Heart left ventricle (tissue), 16 donors: ENCODE measurements at regions of chr12 and their contacts with region 1.

Region 1: GRCh38 chr12:124518051-124518932 is 49.1 kb downstream of the NCOR2 start:
- DNase-seq: peak; percentile 97 to 99 (median 98)
- ATAC-seq: peak; percentile 69 to 79 (median 72)
- H3K4me3 ChIP-seq: peak overlapping the region; percentile 35 to 81 (median 58)
- H3K27ac ChIP-seq: peak overlapping the region; percentile 90 to 100 (median 95)
- H3K4me1 ChIP-seq: peaks cover 15 to 98% (median 85%) of the 10 kb centered on the region in 12 donors
- H3K27me3 ChIP-seq: no peaks in the 10 kb centered on the region
- CTCF ChIP-seq: no peak
- POLR2A ChIP-seq: peak in 1 of 2 donors; percentile 32

Region 2: DNA sequence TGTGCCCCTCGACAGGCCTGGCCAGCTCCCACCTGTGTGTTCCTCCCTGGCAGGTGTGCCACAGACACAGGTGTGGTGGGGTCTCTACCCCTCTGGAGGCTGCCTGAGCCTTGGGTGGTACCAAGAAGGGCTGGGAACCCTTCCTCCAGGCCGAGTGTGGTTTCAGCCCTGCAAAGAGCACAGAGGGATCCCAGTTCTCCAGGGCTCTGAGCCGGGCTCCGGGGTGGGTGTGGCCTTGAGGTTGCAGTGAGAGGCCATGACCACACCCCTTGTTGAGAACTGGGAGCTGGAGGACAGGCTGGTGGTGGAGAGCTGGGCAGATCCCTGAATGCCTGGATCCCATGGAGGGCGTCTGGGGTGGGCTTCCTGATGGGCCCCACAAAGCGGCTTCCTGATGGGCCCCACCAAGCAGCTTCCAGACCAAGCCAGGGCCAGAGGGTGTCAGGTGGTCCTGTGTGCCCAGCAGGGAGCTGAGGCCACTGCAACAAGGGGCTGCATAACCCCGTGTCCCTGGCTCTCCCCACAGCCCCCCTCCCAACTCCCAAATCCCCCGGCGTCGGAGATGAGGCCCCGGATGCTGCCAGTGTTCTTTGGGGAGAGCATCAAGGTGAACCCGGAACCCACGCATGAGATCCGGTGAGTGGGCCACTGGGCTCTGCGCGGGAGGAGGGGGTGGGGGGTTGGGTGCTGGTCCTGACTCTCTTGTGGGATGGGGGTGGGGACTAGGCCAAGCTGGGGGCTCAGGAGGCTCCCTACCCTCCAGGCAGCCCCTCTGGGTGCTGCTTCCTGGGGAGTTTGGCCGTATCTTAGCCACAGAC is 206.8 kb before region 1 on chr12:
- intact Hi-C with region 1: no loop called
- DNase-seq: no peak
- ATAC-seq: no peak
- H3K4me3 ChIP-seq: no peak overlapping the region
- H3K27ac ChIP-seq: no peak overlapping the region
- H3K4me1 ChIP-seq: no peaks in the 10 kb centered on the region
- H3K27me3 ChIP-seq: no peaks in the 10 kb centered on the region
- CTCF ChIP-seq: no peak
- POLR2A ChIP-seq: no peak

Region 3: GRCh38 chr12:124369055-124369900 is 149.0 kb before region 1 on chr12:
- intact Hi-C with region 1: loop called in 2 of 10 experiments (anchors 5 kb)
- DNase-seq: peak; percentile 93 to 96 (median 94)
- ATAC-seq: peak; percentile 82 to 90 (median 88)
- H3K4me3 ChIP-seq: peak overlapping the region in 2 of 12 donors; percentile 12 to 16
- H3K27ac ChIP-seq: peak overlapping the region; percentile 74 to 99 (median 94)
- H3K4me1 ChIP-seq: peaks cover 8 to 76% (median 56%) of the 10 kb centered on the region in 12 donors
- H3K27me3 ChIP-seq: no peaks in the 10 kb centered on the region
- CTCF ChIP-seq: peak; percentile 23 to 69 (median 52)
- POLR2A ChIP-seq: peak in 1 of 2 donors; percentile 14

Region 4: GRCh38 chr12:124388679-124389536 is 129.4 kb before region 1 on chr12:
- intact Hi-C with region 1: loop called in 3 of 10 experiments (anchors 5 to 10 kb)
- DNase-seq: peak; percentile 89 to 93 (median 93)
- ATAC-seq: peak; percentile 21 to 67 (median 59)
- H3K4me3 ChIP-seq: peak overlapping the region; percentile 33 to 81 (median 64)
- H3K27ac ChIP-seq: peak overlapping the region; percentile 73 to 99 (median 96)
- H3K4me1 ChIP-seq: peaks cover 23 to 98% (median 90%) of the 10 kb centered on the region in 12 donors
- H3K27me3 ChIP-seq: no peaks in the 10 kb centered on the region
- CTCF ChIP-seq: peak in 3 of 12 donors; percentile 9 to 34 (median 22)
- POLR2A ChIP-seq: peak in 1 of 2 donors; percentile 52

Region 5: GRCh38 chr12:124538194-124539082 is 20.1 kb after region 1 on chr12:
- intact Hi-C with region 1: no loop called
- DNase-seq: peak in 2 of 5 donors; percentile 57 to 66
- ATAC-seq: peak; percentile 9 to 50 (median 26)
- H3K4me3 ChIP-seq: no peak overlapping the region
- H3K27ac ChIP-seq: peak overlapping the region in 11 of 12 donors; percentile 2 to 74 (median 52)
- H3K4me1 ChIP-seq: peaks cover 10 to 56% (median 46%) of the 10 kb centered on the region in 12 donors
- H3K27me3 ChIP-seq: no peaks in the 10 kb centered on the region
- CTCF ChIP-seq: no peak
- POLR2A ChIP-seq: no peak

Region 6: DNA sequence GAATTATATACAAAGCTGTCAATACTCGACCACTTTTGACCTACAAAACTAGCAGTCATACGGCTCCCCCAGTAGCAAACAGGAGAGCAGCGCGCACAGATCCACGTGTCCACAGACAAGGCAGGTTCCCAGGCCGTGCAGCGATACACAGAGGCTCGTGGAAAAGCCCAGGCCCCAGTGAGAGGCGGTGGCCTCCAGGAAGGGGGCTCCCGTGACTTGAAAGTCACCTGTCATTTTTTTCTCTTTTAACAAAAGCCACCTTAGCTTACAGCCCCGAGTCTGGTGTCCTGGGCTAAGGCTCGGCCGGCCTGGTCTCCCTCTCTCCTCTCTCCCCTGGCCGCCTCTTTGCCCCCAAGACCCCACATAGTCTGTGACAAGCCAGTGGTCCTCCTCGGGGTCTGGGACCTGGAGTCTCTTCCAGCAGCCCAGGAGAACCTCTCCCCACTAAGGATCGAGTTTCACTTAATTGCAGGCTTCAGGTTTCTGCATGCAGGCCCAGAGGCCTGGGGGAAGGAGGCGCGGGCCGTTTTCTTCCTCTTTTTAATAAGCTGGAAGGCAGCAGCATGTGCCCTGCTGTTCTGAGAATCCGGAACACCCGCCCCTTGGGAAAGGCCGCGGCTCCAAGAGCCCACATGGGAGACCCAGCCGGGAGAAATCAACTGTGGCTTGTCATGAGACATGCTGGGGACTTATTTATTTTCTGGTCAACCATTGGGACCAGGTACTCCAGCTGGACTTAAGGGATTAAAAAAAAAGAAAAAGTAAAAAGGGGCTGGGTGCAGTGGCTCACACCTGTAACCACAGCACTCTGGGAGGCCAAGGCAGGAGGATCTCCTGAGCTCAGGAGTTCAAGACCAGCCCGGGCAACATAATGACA is 33.2 kb after region 1 on chr12:
- intact Hi-C with region 1: loop called in 4 of 10 experiments (anchors 5 kb)
- DNase-seq: peak; percentile 67 to 83 (median 77)
- ATAC-seq: peak in 3 of 4 donors; percentile 22 to 44 (median 25)
- H3K4me3 ChIP-seq: no peak overlapping the region
- H3K27ac ChIP-seq: peak overlapping the region in 10 of 12 donors; percentile 9 to 82 (median 49)
- H3K4me1 ChIP-seq: peaks cover 21 to 91% (median 79%) of the 10 kb centered on the region in 12 donors
- H3K27me3 ChIP-seq: no peaks in the 10 kb centered on the region
- CTCF ChIP-seq: no peak
- POLR2A ChIP-seq: no peak

Region 7: DNA sequence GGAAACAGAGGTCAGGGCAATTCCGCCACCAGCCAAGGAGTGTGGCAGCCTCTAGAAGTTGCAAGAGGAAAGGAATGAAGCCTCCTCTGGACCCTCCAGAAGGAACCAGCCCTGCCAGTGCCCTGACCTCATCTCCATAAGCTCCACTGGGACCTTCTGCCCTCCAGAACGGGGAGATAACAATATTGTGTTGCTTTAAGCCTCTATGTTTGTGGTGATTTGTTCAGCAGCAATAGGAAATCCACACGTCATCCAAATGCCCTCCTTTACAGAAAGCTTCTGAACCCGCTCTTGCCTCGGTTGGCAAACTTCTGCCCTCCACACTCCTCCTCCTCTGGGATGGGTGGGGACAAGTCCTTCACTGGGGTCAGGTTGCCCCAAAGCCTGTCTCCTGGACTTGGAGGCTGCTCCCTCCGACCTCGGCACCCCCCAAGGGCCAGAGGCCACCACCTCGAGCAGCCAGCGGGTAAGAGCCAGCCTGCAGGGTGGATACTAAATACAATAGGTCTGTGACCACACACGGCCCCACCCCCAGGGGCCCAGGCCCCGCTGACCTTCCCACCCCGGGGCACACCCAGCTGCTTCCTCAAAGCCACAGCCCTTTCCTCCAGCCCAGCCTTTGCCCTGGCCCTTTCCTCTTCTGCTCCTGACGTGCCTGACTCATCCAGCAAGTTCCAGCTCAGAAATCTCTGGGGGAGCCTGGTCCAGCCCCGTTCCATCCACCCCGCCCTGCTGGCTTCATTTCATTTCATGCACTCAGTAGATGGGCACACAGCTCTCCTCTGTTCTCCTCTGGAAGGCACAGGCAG is 107.8 kb after region 1 on chr12:
- intact Hi-C with region 1: loop called in 1 of 10 experiments (anchors 10 kb)
- DNase-seq: peak; percentile 88 to 94 (median 93)
- ATAC-seq: peak; percentile 83 to 96 (median 94)
- H3K4me3 ChIP-seq: peak overlapping the region in 1 of 12 donors; percentile 6
- H3K27ac ChIP-seq: peak overlapping the region; percentile 63 to 94 (median 86)
- H3K4me1 ChIP-seq: peaks cover 3 to 43% (median 35%) of the 10 kb centered on the region in 12 donors
- H3K27me3 ChIP-seq: no peaks in the 10 kb centered on the region
- CTCF ChIP-seq: no peak
- POLR2A ChIP-seq: peak in 1 of 2 donors; percentile 7

Region 8: DNA sequence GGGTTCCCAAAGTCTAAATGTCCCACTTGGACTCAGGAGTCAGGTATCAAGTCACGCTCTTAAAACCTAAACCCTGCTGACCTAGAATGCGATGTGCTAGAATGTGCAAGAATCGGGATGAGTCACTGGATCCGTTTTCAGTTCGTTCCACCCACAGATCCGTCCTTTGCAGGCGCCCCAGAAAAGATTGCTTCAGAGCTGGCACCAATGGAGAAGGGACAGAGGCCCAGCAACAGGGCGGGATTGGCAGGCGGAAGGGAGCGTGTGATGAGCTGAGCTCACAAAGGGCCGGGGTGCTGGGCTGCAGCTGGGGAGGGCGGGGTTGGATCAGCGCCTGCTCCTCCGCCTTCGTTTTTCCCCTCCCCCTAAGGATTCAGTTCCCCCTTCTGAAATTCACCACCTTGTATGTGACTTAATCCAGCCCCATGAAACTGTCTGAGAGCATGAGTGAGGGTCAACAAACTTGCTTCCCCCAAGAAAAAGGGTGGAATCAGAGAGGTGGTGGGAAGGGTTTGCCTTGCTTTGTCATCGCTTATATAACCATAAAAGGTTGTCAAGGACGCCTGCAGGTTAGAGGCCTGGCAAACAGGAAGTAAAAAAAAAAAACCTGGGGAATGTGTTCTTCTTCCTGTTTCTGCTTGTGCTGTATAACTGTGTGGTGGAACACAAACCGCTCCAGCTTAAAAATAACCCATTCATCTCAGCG is 399.0 kb after region 1 on chr12:
- intact Hi-C with region 1: loop called in 1 of 10 experiments (anchors 10 kb)
- DNase-seq: peak; percentile 97 to 99 (median 98)
- ATAC-seq: peak; percentile 90 to 94 (median 93)
- H3K4me3 ChIP-seq: peak overlapping the region in 11 of 12 donors; percentile 22 to 97 (median 80)
- H3K27ac ChIP-seq: peak overlapping the region; percentile 99 to 100 (median 100)
- H3K4me1 ChIP-seq: peaks cover 0 to 72% (median 51%) of the 10 kb centered on the region in 12 donors
- H3K27me3 ChIP-seq: no peaks in the 10 kb centered on the region
- CTCF ChIP-seq: no peak
- POLR2A ChIP-seq: peak in 1 of 2 donors; percentile 67